GM12878 (cell line): ENCODE measurements at regions of chr12 and their contacts with region 1.

Region 1: GRCh38 chr12:74415633-74416032 is 122.0 kb upstream of the ATXN7L3B start:
- DNase-seq: no peak
- ATAC-seq: peak; percentile 71
- H3K4me3 ChIP-seq: no peak overlapping the region
- H3K27ac ChIP-seq: no peak overlapping the region
- H3K4me1 ChIP-seq: no peaks in the 10 kb centered on the region
- H3K27me3 ChIP-seq: no peaks in the 10 kb centered on the region
- CTCF ChIP-seq: peak; percentile 31 to 47 (median 40); a peak in 4 of 6 replicates
- EP300 ChIP-seq: no peak
- POLR2A ChIP-seq: no peak
- RAD21 ChIP-seq: peak; percentile 54

Region 2: GRCh38 chr12:74021937-74022336 is 393.7 kb before region 1 on chr12:
- CTCF ChIA-PET with region 1: interaction called, 20 read pairs
- POLR2A ChIA-PET with region 1: no interaction called
- RAD21 ChIA-PET with region 1: interaction called, 3 read pairs
- SMC1A ChIA-PET with region 1: interaction called, 5 read pairs
- in situ Hi-C with region 1: no loop called
- intact Hi-C with region 1: loop called (anchors 2 kb)
- DNase-seq: no peak
- ATAC-seq: peak; percentile 99
- H3K4me3 ChIP-seq: no peak overlapping the region
- H3K27ac ChIP-seq: no peak overlapping the region
- H3K4me1 ChIP-seq: no peaks in the 10 kb centered on the region
- H3K27me3 ChIP-seq: no peaks in the 10 kb centered on the region
- CTCF ChIP-seq: peak; percentile 60 to 72 (median 72)
- EP300 ChIP-seq: no peak
- POLR2A ChIP-seq: no peak
- RAD21 ChIP-seq: peak; percentile 49

Region 3: GRCh38 chr12:74111688-74112360 is 303.8 kb before region 1 on chr12:
- CTCF ChIA-PET with region 1: interaction called, 19 read pairs
- POLR2A ChIA-PET with region 1: no interaction called
- RAD21 ChIA-PET with region 1: interaction called, 4 read pairs
- SMC1A ChIA-PET with region 1: interaction called, 5 read pairs
- in situ Hi-C with region 1: no loop called
- intact Hi-C with region 1: loop called (anchors 5 kb)
- DNase-seq: no peak
- ATAC-seq: peak; percentile 89
- H3K4me3 ChIP-seq: no peak overlapping the region
- H3K27ac ChIP-seq: no peak overlapping the region
- H3K4me1 ChIP-seq: no peaks in the 10 kb centered on the region
- H3K27me3 ChIP-seq: no peaks in the 10 kb centered on the region
- CTCF ChIP-seq: peak in 2 of 3 experiments; percentile 24 to 52; a peak in 3 of 6 replicates
- EP300 ChIP-seq: no peak
- POLR2A ChIP-seq: no peak
- RAD21 ChIP-seq: peak; percentile 55

Region 4: GRCh38 chr12:74401035-74401434 is 14.6 kb before region 1 on chr12:
- CTCF ChIA-PET with region 1: interaction called, 15 read pairs
- POLR2A ChIA-PET with region 1: no interaction called
- RAD21 ChIA-PET with region 1: no interaction called
- SMC1A ChIA-PET with region 1: interaction called, 4 read pairs
- in situ Hi-C with region 1: no loop called
- intact Hi-C with region 1: no loop called
- DNase-seq: no peak
- ATAC-seq: no peak
- H3K4me3 ChIP-seq: no peak overlapping the region
- H3K27ac ChIP-seq: no peak overlapping the region
- H3K4me1 ChIP-seq: no peaks in the 10 kb centered on the region
- H3K27me3 ChIP-seq: no peaks in the 10 kb centered on the region
- CTCF ChIP-seq: no peak
- EP300 ChIP-seq: no peak
- POLR2A ChIP-seq: no peak
- RAD21 ChIP-seq: no peak

Region 5: GRCh38 chr12:74537707-74538385 is 122.2 kb after region 1 on chr12 and contains the start of gene ATXN7L3B:
- CTCF ChIA-PET with region 1: interaction called, 12 read pairs
- POLR2A ChIA-PET with region 1: interaction called, 3 read pairs
- RAD21 ChIA-PET with region 1: interaction called, 10 read pairs
- SMC1A ChIA-PET with region 1: interaction called, 5 read pairs
- in situ Hi-C with region 1: no loop called
- intact Hi-C with region 1: loop called (anchors 1 kb)
- DNase-seq: peak; percentile 73
- ATAC-seq: peak; percentile 95
- H3K4me3 ChIP-seq: peak within 1 kb of the TSS; percentile 83
- H3K27ac ChIP-seq: peak within 1 kb of the TSS; percentile 90
- H3K4me1 ChIP-seq: peaks cover 5% of the 10 kb centered on the region; the same call in 1 of the 2 replicates
- H3K27me3 ChIP-seq: no peaks in the 10 kb centered on the region
- CTCF ChIP-seq: 0 out of 6 replicates have a peak, but pooled peaks of 1 of the 3 experiments have one; percentile 6
- EP300 ChIP-seq: no peak
- POLR2A ChIP-seq: peak; percentile 95
- RAD21 ChIP-seq: no peak
- polyA plus RNA-seq, gene ATXN7L3B: 6.3 to 6.9 TPM

Region 6: DNA sequence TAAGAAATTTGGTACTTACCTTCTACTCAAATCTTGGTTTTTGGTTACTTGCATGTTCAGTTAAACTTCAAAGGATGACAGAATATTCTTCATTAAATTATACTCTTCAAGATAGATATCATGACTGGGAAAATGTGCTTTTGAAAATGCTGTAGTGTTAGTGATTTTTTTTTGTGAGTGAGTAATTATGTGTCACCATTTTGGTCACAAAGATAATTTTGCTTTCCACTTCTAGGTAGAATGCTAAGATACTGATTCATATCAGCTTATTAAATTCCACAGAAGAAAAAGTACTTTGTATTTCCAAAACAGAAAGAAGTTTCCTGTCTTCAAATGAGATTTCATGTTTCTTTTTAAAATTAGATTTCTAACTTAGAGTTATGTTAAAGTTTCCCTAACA is 183.2 kb after region 1 on chr12:
- CTCF ChIA-PET with region 1: no interaction called
- POLR2A ChIA-PET with region 1: no interaction called
- RAD21 ChIA-PET with region 1: no interaction called
- SMC1A ChIA-PET with region 1: no interaction called
- in situ Hi-C with region 1: no loop called
- intact Hi-C with region 1: no loop called
- DNase-seq: no peak
- ATAC-seq: no peak
- H3K4me3 ChIP-seq: no peak overlapping the region
- H3K27ac ChIP-seq: no peak overlapping the region
- H3K4me1 ChIP-seq: no peaks in the 10 kb centered on the region
- H3K27me3 ChIP-seq: no peaks in the 10 kb centered on the region
- CTCF ChIP-seq: no peak
- EP300 ChIP-seq: no peak
- POLR2A ChIP-seq: no peak
- RAD21 ChIP-seq: no peak